Common myeloid progenitor, CD34-positive (primary cell): ENCODE measurements at regions of chr9 and their contacts with region 1.

Region 1: GRCh38 chr9:105244003-105244733 is at the start of gene SLC44A1:
- DNase-seq: peak; percentile 95 to 98 (median 96)
- H3K4me3 ChIP-seq: peak within 1 kb of the TSS; percentile 55 to 92 (median 80)
- H3K27ac ChIP-seq: peak within 1 kb of the TSS in 1 of 2 experiments; percentile 65
- H3K4me1 ChIP-seq: peaks cover 5 to 24% (median 15%) of the 10 kb centered on the region in 4 experiments
- H3K27me3 ChIP-seq: no peaks in the 10 kb centered on the region

Region 2: DNA sequence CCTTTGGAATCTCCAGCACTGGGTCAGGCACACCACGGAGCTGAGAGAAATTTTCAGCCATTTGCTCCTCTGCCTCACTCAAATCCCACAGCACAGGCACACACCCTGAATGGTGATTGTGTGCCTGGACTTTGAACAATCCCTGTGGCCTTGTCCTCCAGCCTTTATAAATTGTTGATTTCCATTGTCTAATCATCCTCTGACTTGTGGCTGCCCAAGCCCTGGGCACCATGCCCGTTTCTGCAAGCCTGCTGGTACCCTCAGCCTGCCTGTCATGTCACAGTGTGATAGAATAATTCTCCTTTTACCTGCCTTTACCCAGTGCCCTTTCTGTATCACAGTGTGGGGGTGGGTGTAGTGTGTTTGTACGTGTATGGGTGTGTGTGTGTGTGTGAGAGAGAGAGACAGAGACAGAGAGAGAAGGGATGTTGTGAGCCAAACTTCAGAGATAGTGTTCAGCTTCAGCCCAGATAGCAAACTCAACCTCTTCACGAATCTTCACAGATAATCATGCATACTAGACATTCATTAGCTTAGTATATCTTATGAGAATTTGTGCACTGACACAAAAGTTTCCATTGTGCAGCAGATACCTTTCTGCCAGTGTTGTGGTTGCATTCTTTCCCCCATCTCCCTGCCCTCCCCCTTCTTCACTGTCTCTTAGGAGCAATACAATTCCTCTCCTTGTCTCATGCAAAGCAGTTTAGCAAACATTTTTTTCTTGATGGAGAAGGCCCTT is 27.6 kb before region 1 on chr9:
- CTCF ChIA-PET with region 1: no interaction called
- POLR2A ChIA-PET with region 1: no interaction called
- DNase-seq: no peak
- H3K4me3 ChIP-seq: no peak overlapping the region
- H3K27ac ChIP-seq: no peak overlapping the region
- H3K4me1 ChIP-seq: no peaks in the 10 kb centered on the region
- H3K27me3 ChIP-seq: no peaks in the 10 kb centered on the region

Region 3: GRCh38 chr9:105254226-105254625 is 10.1 kb after region 1 on chr9:
- CTCF ChIA-PET with region 1: interaction called, 14 read pairs
- POLR2A ChIA-PET with region 1: interaction called, 3 read pairs
- DNase-seq: no peak
- H3K4me3 ChIP-seq: no peak overlapping the region
- H3K27ac ChIP-seq: no peak overlapping the region
- H3K4me1 ChIP-seq: peaks cover 0 to 13% (median 11%) of the 10 kb centered on the region in 4 experiments
- H3K27me3 ChIP-seq: no peaks in the 10 kb centered on the region